ENCODE measurements at regions of chr10 and their contacts with region 1.

Region 1: GRCh38 chr10:133124357-133125211 is 35.4 kb upstream of the KNDC1 start:
- DNase-seq: no peak
- ATAC-seq: no peak

Region 2: GRCh38 chr10:132836832-132837540 is 287.6 kb before region 1 on chr10:
- intact Hi-C with region 1: loop called (anchors 10 kb)
- DNase-seq: peak; percentile 66
- ATAC-seq: peak; percentile 50

Measured in sciatic nerve (tissue), 2 donors.